ENCODE measurements at regions of chr19 and their contacts with region 1.

Region 1: DNA sequence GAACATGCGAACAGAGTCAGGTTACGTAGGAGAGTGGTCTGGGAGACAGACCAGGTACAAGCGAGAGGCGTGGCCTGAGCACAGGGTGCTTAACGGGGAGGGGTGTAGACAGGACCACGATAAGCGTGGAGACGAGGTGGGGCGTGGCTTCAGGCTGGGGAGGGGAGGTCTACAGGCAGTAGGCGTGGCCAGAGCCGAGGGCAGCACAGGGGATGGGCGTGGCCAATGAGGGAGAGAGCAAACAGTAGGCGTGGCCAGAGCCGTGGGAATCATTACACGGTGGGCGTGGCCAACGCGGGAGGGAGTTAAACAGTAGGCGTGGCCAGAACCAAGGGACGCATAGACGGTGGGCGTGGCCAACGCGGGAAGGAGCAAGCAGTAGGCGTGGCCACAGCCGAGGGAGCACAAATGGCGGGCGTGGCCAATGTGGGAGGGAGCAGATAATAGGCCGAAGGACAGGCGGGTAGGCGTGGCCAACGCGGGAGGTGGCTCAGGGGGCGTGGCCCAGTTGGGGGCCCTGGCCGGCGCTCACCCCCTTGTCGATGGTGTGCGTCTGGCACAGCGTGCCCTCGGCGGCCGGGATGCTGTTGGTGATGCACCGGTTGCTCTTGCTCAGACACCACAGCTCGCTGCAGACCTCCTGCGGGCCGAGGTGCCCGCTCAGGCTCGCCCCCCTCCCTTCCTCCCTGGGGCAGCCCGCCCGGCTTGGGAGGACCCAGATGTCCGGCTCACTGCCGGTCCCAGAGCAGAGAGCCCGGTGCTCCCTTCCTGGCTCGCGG is 15.2 kb upstream of the MYO1F start:
- DNase-seq: peak; percentile 100
- H3K4me3 ChIP-seq: peak overlapping the region; percentile 35 to 62 (median 58)
- H3K27ac ChIP-seq: no peak overlapping the region
- H3K4me1 ChIP-seq: peaks cover 0 to 5% (median under 1%) of the 10 kb centered on the region in 4 experiments; a peak in 4 of 7 replicates
- H3K27me3 ChIP-seq: peaks cover 0 to 3% (median 1%) of the 10 kb centered on the region in 4 experiments; a peak in 3 of 7 replicates
- CTCF ChIP-seq: no peak
- EP300 ChIP-seq: no peak
- POLR2A ChIP-seq: peak; percentile 32 to 64
- RAD21 ChIP-seq: no peak

Region 2: GRCh38 chr19:8404391-8405151 is 187.8 kb before region 1 on chr19:
- CTCF ChIA-PET with region 1: no interaction called
- POLR2A ChIA-PET with region 1: no interaction called
- DNase-seq: no peak
- H3K4me3 ChIP-seq: no peak overlapping the region
- H3K27ac ChIP-seq: no peak overlapping the region
- H3K4me1 ChIP-seq: no peaks in the 10 kb centered on the region
- H3K27me3 ChIP-seq: no peaks in the 10 kb centered on the region
- CTCF ChIP-seq: no peak
- EP300 ChIP-seq: no peak
- POLR2A ChIP-seq: no peak
- RAD21 ChIP-seq: no peak

Region 3: DNA sequence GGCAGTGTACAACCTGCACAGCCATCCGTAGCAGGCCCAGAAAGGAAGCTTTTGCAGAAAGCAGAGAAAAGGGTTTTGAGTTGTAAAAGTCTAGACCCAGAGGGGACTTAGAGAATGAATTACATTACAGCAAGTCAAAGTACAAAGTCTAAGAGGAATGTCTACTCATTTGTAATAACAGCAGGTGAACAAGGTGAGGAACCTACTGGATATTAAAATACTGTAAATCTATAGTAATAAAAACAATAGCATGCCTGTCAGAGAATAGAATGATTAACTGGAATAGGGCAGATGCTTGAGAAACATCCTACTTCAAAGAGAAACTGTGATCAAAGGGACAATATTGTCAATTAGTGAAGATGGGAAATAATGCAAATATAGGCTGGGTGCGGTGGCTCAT is 60.2 kb before region 1 on chr19:
- CTCF ChIA-PET with region 1: no interaction called
- POLR2A ChIA-PET with region 1: no interaction called
- DNase-seq: no peak
- H3K4me3 ChIP-seq: no peak overlapping the region
- H3K27ac ChIP-seq: no peak overlapping the region
- H3K4me1 ChIP-seq: peaks cover 0 to 5% (median 0%) of the 10 kb centered on the region in 4 experiments; a peak in 2 of 7 replicates
- H3K27me3 ChIP-seq: no peaks in the 10 kb centered on the region
- CTCF ChIP-seq: no peak
- EP300 ChIP-seq: no peak
- POLR2A ChIP-seq: no peak
- RAD21 ChIP-seq: no peak

Region 4: DNA sequence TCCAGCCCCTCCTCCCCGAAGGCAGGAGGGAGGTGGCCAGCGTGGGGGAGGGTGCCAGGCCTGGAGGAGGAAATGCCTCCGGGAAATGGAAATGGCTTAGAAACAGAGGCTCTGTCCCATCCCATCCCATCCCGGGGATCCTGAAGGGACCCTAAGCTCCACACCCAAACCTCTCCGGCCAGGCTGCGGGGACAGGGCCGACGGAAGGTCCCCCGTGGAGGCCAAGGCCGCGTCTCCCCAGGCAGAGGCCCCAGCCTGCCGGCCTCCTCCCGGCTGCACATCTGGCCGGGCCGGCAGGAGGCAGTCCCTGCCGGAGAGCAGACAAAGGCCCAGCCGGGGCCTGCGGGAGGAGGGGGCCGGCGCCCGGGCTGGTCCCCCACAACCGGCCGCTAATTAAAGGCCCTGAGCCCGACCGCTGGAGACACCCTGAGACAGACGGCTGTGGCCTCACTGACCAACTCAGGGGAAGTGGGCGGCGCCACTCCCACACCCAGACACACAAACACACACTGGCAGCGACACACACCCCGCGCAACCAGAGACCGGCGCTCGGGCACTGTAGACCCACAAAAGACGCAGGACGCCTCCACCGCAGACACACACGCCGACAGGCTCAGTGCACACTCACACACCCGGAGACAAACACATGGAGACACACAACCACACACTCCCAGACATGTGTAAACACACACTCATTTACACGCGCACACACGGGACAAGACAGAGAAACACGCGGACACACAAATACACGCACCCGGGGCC is 17.0 kb after region 1 on chr19:
- CTCF ChIA-PET with region 1: interaction called, 26 read pairs
- POLR2A ChIA-PET with region 1: interaction called, 117 read pairs
- DNase-seq: peak; percentile 36 to 82
- H3K4me3 ChIP-seq: peak overlapping the region; percentile 70 to 93 (median 88)
- H3K27ac ChIP-seq: peak overlapping the region; percentile 79
- H3K4me1 ChIP-seq: peaks cover 10 to 29% (median 19%) of the 10 kb centered on the region in 4 experiments
- H3K27me3 ChIP-seq: no peaks in the 10 kb centered on the region
- CTCF ChIP-seq: peak in 1 of 3 experiments; percentile 11; a peak in 2 of 4 replicates
- EP300 ChIP-seq: peak in 1 of 2 experiments; percentile 52; a peak in 1 of 3 replicates
- POLR2A ChIP-seq: peak in 1 of 2 experiments; percentile 71; a peak in 1 of 3 replicates
- RAD21 ChIP-seq: peak in 1 of 2 experiments; percentile 0; a peak in 1 of 4 replicates

Region 5: GRCh38 chr19:8738377-8738776 is 146.0 kb after region 1 on chr19:
- CTCF ChIA-PET with region 1: no interaction called
- POLR2A ChIA-PET with region 1: no interaction called
- DNase-seq: no peak
- H3K4me3 ChIP-seq: no peak overlapping the region
- H3K27ac ChIP-seq: no peak overlapping the region
- H3K4me1 ChIP-seq: no peaks in the 10 kb centered on the region
- H3K27me3 ChIP-seq: no peaks in the 10 kb centered on the region
- CTCF ChIP-seq: no peak
- EP300 ChIP-seq: no peak
- POLR2A ChIP-seq: no peak
- RAD21 ChIP-seq: no peak